ENCODE measurements at regions of chr7 and their contacts with region 1.

Region 1: GRCh38 chr7:71652510-71652909 is 520.6 kb downstream of the GALNT17 start:
- DNase-seq: no peak
- ATAC-seq: no peak

Region 2: GRCh38 chr7:71594746-71595145 is 57.8 kb before region 1 on chr7:
- intact Hi-C with region 1: loop called (anchors 5 kb)
- DNase-seq: no peak
- ATAC-seq: no peak